Transverse colon (tissue), 4 donors: ENCODE measurements at regions of chrX and their contacts with region 1.

Region 1: DNA sequence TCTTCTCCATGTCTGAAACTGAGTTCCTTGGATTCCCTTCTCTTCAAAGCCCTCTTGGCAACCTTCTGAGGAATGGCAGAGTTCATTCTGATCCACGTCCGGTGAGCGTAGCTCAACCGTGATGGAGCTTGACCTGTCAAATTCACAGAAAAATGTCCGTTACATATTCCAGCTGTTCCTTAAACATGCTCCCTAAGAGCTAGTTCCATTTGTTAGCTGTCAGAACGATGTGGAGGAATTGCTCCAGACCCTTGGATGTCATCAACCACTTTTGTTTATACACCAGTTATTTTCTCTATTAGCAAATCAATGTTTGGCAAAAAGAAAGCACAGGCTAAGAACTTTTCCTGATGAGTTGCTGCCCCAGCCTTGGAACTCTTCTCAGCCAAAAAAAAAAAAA is 50.1 kb downstream of the NHS start:
- DNase-seq: no peak
- H3K4me3 ChIP-seq: no peak overlapping the region
- H3K27ac ChIP-seq: no peak overlapping the region
- H3K4me1 ChIP-seq: no peaks in the 10 kb centered on the region
- H3K27me3 ChIP-seq: no peaks in the 10 kb centered on the region
- CTCF ChIP-seq: no peak
- EP300 ChIP-seq: no peak
- POLR2A ChIP-seq: no peak

Region 2: DNA sequence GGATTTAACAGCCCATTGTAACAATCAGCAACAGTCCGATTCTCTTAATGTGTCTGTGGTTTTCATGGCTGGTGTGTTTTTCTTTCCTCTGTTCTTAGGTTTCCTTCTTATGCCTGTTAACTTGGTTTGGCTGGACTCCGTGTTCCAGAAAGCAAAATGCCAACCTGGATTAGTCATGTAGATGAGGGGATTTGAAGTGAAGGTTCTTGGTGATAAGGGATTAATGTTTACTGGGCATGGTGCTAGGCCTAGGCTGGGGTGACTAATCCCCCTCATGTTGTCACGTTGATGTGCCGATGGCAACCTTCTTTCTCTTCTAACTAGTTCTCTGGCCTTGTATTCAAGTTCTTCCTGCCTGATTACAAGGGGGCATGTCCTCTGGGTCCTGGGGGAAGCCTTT is 392.8 kb before region 1 on chrX:
- in situ Hi-C with region 1: no loop called
- intact Hi-C with region 1: no loop called
- DNase-seq: no peak
- H3K4me3 ChIP-seq: no peak overlapping the region
- H3K27ac ChIP-seq: no peak overlapping the region
- H3K4me1 ChIP-seq: peaks cover 0 to 8% (median 0%) of the 10 kb centered on the region in 4 donors
- H3K27me3 ChIP-seq: no peaks in the 10 kb centered on the region
- CTCF ChIP-seq: no peak
- EP300 ChIP-seq: no peak
- POLR2A ChIP-seq: no peak

Region 3: DNA sequence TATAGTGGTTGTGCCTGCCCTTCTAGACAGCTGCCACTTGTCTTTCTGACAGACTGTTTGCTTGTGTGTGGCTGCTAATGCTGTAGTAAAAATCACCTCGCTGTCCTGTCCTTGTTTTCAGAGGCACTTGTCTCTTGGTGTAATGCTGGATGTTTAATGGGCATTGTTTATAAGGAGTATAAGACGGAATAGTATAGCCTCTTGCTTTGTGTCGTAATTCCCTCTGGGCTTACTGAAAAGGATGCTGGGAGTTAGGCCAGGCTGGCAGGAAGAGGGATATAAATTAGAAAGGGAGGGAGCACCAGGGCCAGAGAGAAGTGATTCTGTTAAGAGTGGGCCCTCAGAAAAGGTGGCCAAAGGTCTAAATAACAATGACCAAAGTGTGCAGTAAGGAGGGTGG is 21.2 kb before region 1 on chrX:
- in situ Hi-C with region 1: no loop called
- intact Hi-C with region 1: loop called (anchors 1 kb)
- DNase-seq: no peak
- H3K4me3 ChIP-seq: no peak overlapping the region
- H3K27ac ChIP-seq: peak overlapping the region in 1 of 4 donors; percentile 18
- H3K4me1 ChIP-seq: no peaks in the 10 kb centered on the region
- H3K27me3 ChIP-seq: no peaks in the 10 kb centered on the region
- CTCF ChIP-seq: no peak
- EP300 ChIP-seq: no peak
- POLR2A ChIP-seq: no peak